Caco-2 (cell line): ENCODE measurements at regions of chr19 and their contacts with region 1.

Region 1: GRCh38 chr19:4400135-4400936 is at the start of gene SH3GL1:
- DNase-seq: peak; percentile 87 to 88
- H3K4me3 ChIP-seq: peak within 1 kb of the TSS; percentile 98
- H3K4me3 Mint-ChIP-seq: peak within 1 kb of the TSS; percentile 75
- H3K27ac Mint-ChIP-seq: peak within 1 kb of the TSS; percentile 79
- H3K4me1 ChIP-seq: peaks cover 12% of the 10 kb centered on the region
- H3K4me1 Mint-ChIP-seq: peaks cover 14% of the 10 kb centered on the region
- H3K27me3 ChIP-seq: no peaks in the 10 kb centered on the region
- H3K27me3 Mint-ChIP-seq: no peaks in the 10 kb centered on the region
- CTCF ChIP-seq: peak; percentile 88 to 95
- total RNA-seq, gene SH3GL1: 91.3 and 91.5 TPM in 2 replicates

Region 2: DNA sequence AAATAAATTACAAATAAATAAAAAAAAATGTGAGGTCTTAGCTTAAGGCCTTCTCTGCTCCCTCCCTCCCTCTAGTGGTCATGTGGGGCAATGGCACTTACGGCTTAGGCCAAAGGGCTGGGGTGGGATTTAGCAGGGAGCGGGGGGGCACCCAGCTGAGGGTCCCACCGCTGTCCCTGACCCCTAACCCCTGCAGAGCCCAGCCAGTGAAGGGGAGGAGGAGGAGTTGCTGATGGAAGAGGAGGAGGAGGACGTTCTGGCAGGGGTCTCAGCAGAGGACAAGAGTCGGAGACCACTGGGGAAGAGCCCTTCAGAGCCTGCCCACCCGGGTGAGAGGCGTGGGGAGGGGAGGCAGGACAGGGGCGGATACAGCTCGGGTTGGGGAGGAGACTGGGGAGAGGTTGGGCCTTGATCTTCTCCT is 47.6 kb before region 1 on chr19:
- CTCF ChIA-PET with region 1: interaction called, 10 read pairs
- POLR2A ChIA-PET with region 1: no interaction called
- intact Hi-C with region 1: no loop called
- DNase-seq: peak in 1 of 2 experiments; percentile 64
- H3K4me3 ChIP-seq: no peak overlapping the region
- H3K4me3 Mint-ChIP-seq: no peak overlapping the region
- H3K27ac Mint-ChIP-seq: no peak overlapping the region
- H3K4me1 ChIP-seq: no peaks in the 10 kb centered on the region
- H3K4me1 Mint-ChIP-seq: no peaks in the 10 kb centered on the region
- H3K27me3 ChIP-seq: no peaks in the 10 kb centered on the region
- H3K27me3 Mint-ChIP-seq: no peaks in the 10 kb centered on the region
- CTCF ChIP-seq: peak; percentile 83 to 84

Region 3: DNA sequence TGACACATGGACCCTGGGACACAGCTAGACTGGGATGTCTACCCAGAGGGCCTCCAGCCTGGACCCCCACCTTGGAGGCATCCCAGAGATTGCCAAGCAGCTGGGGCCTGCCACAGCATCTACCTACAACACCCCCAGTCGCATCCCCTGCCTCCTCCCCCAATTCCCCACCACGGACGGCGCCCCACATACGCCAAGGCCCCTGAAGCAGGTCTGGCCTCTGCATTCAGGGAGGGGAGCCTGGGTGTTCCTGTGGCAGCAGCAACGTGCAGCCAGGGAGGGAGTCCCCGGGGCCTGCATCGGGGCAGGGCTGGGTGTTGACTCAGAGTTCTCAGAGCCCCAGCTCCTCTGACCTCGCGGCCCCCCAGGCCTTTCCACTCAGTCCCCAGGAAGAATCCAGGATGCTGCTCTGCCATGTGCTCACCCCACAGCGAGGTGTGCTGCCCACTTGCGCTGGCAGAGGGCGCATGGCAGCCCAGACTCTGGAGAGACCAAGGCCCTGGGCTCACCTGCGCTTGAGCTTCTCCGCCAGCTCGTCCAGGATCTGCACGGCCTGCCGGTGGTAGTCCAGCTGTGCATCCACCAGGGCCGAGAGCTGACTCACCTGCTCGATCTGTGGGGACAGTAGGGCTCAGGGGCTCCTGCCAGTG is 37.4 kb before region 1 on chr19:
- CTCF ChIA-PET with region 1: interaction called, 4 read pairs
- POLR2A ChIA-PET with region 1: no interaction called
- intact Hi-C with region 1: loop called (anchors 5 kb)
- DNase-seq: peak in 1 of 2 experiments; percentile 49
- H3K4me3 ChIP-seq: no peak overlapping the region
- H3K4me3 Mint-ChIP-seq: no peak overlapping the region
- H3K27ac Mint-ChIP-seq: peak overlapping the region; percentile 48
- H3K4me1 ChIP-seq: 0 out of 2 replicates have a peak, but pooled peaks cover 4% of the 10 kb centered on the region
- H3K4me1 Mint-ChIP-seq: no peaks in the 10 kb centered on the region
- H3K27me3 ChIP-seq: no peaks in the 10 kb centered on the region
- H3K27me3 Mint-ChIP-seq: no peaks in the 10 kb centered on the region
- CTCF ChIP-seq: peak; percentile 29 to 31

Region 4: GRCh38 chr19:4375164-4376027 is 24.9 kb before region 1 on chr19:
- CTCF ChIA-PET with region 1: interaction called, 25 read pairs
- POLR2A ChIA-PET with region 1: interaction called, 27 read pairs
- intact Hi-C with region 1: loop called (anchors 1 kb)
- DNase-seq: peak; percentile 96 to 98
- H3K4me3 ChIP-seq: no peak overlapping the region
- H3K4me3 Mint-ChIP-seq: peak overlapping the region; percentile 57
- H3K27ac Mint-ChIP-seq: peak overlapping the region; percentile 93
- H3K4me1 ChIP-seq: peaks cover 40% of the 10 kb centered on the region
- H3K4me1 Mint-ChIP-seq: peaks cover 17% of the 10 kb centered on the region
- H3K27me3 ChIP-seq: no peaks in the 10 kb centered on the region
- H3K27me3 Mint-ChIP-seq: no peaks in the 10 kb centered on the region
- CTCF ChIP-seq: peak; percentile 33 to 61

Region 5: DNA sequence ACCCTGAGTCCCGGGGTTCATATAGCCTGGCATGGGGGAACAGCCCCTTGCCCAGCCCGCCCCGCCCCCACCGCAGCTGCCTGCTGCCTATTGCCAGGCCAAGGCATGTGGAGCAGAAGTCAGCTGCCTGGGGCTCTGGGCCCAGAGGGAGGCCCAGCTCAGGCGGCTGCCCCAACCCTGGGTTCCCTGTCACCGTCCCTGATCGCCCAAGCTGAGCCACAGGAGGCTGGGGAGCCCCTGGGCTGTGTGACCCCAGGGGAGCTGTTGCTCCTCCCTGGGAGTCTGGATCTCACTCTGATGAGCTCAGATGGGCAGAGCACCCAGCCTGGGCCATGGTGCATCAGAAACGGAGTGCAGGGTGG is 116.6 kb after region 1 on chr19:
- CTCF ChIA-PET with region 1: no interaction called
- POLR2A ChIA-PET with region 1: no interaction called
- intact Hi-C with region 1: no loop called
- DNase-seq: no peak
- H3K4me3 ChIP-seq: no peak overlapping the region
- H3K4me3 Mint-ChIP-seq: no peak overlapping the region
- H3K27ac Mint-ChIP-seq: no peak overlapping the region
- H3K4me1 ChIP-seq: peaks cover 10% of the 10 kb centered on the region
- H3K4me1 Mint-ChIP-seq: peaks cover 11% of the 10 kb centered on the region
- H3K27me3 ChIP-seq: no peaks in the 10 kb centered on the region
- H3K27me3 Mint-ChIP-seq: no peaks in the 10 kb centered on the region
- CTCF ChIP-seq: no peak

Region 6: GRCh38 chr19:4968462-4969291 is 568.3 kb after region 1 on chr19 and contains the start of gene KDM4B:
- CTCF ChIA-PET with region 1: interaction called, 10 read pairs
- POLR2A ChIA-PET with region 1: no interaction called
- intact Hi-C with region 1: no loop called
- DNase-seq: peak; percentile 99
- H3K4me3 ChIP-seq: peak within 1 kb of the TSS; percentile 71
- H3K4me3 Mint-ChIP-seq: peak within 1 kb of the TSS; percentile 85
- H3K27ac Mint-ChIP-seq: peak within 1 kb of the TSS; percentile 88
- H3K4me1 ChIP-seq: peaks cover 15% of the 10 kb centered on the region
- H3K4me1 Mint-ChIP-seq: peaks cover 27% of the 10 kb centered on the region
- H3K27me3 ChIP-seq: no peaks in the 10 kb centered on the region
- H3K27me3 Mint-ChIP-seq: no peaks in the 10 kb centered on the region
- CTCF ChIP-seq: no peak
- total RNA-seq, gene KDM4B: 27.4 and 30.9 TPM in 2 replicates